Right ventricle myocardium inferior (tissue), 1 donor: ENCODE measurements at regions of chr4 and their contacts with region 1.

Region 1: DNA sequence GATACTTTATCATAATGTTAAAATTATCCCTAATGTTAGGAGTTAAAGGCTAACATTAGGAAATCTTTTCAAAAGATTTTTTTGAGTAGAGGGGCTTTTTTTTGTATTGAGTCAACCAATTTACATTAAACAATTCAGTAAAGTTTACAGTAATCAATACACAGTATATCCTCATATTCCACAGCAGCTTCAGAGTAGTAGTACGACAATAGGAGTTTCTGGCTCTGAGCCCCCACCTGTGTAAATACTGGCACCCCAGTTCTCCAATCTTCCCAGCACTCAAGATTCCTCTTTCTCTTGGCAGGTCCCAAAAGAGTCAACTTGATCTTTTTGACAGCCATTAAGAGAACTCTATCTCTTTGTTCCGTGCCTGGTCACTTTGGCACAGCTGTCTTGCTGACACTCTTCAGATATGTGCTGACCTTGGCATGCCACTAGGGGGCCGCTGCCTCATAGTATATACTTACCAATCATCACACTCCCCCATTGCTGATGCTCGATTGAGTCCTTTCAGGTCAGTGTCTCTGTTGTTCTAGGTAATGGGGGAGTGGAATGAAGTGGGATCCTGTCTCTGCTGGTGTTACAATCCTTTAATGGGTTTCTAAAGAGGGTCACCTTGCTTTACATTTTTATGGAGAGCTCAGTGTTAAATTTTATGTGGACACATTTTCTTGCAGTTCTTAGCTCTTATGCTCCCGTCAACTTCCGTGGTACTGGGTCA is 19.5 kb upstream of the CCNI start:
- DNase-seq: peak; percentile 88
- ATAC-seq: peak; percentile 94

Region 2: GRCh38 chr4:77132652-77133312 is 37.5 kb after region 1 on chr4:
- intact Hi-C with region 1: loop called (anchors 1 kb)
- DNase-seq: no peak
- ATAC-seq: no peak

Region 3: DNA sequence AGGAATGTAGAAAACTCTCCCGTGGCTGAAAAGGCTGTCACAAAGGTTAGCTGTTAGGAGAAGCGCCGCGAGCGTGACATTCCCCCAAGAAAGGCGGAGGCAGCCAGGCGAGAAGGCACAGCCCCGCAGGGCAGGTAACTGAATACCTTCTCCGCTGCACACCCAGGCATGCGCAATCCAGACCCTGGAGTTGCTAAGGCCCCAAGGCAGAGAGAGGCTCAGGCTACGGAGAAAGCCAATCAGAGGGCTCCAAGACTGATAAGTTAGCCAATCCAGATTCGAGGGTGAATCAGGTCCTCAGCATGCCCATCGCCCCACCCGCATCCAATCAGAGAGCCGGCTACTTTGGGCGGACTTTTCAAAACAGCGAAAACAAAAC is 61.3 kb after region 1 on chr4:
- intact Hi-C with region 1: loop called (anchors 5 kb)
- DNase-seq: peak; percentile 94
- ATAC-seq: peak; percentile 97

Region 4: GRCh38 chr4:77203380-77204197 is 108.3 kb after region 1 on chr4:
- intact Hi-C with region 1: loop called (anchors 2 kb)
- DNase-seq: peak; percentile 68
- ATAC-seq: peak; percentile 62

Region 5: DNA sequence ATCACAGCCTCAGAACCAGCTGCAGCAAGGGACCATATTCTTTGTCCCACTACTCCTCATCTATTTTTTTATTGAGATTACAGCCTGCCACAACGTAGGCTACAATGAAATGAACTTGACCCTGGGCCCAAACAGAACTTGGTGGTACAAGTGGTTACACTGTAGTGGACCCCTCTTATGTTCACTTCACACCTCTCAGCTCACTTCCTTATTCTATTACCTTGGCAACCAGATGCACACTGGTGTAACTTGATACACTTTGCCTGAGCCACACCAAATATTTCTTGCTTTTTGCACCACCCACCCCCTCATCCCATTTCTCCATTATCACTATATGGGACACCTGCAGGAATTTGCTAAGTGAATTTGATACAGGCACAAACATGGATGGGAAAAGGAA is 616.2 kb after region 1 on chr4:
- intact Hi-C with region 1: no loop called
- DNase-seq: no peak
- ATAC-seq: no peak